ENCODE measurements at regions of chr2 and their contacts with region 1.

Region 1: DNA sequence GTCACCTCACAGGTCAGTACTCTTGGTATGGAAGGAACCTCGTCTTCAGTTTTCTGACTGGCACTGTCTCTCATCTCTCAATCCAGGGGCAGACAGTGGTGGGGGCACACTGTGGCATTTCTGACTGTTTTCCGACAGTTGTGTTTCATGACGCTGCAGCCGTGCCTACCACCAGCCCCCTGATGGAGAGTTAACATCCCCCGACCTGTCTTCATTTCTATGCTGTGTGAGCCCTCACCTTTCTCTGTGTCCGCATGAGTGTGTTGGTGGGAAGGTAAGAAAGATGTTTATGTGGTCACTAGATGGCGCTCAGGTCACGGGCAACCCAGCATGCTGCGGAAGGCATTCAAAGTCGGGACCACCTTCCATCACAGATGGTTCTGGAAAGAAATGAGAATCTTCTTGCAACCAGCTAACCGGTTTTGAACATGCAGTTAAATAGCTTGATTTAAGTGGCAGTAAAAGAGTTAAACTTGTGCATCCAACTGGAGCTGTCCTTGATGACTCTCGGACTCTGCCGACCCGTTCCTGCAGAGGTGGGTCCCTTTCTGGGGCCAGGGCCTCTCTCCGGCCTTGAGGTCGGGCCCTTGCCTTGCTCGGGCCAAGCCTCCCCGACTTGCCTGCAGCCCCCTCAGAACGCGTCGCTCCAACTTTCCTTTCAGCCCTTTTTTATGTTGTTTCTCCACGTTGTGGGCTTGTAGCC is 92.4 kb downstream of the DYSF start:
- H3K4me3 Mint-ChIP-seq: no peak overlapping the region
- H3K27ac Mint-ChIP-seq: peak overlapping the region; percentile 54
- H3K4me1 Mint-ChIP-seq: peaks cover 18% of the 10 kb centered on the region
- H3K27me3 Mint-ChIP-seq: peaks cover 6% of the 10 kb centered on the region

Region 2: GRCh38 chr2:71933467-71934319 is 388.0 kb after region 1 on chr2:
- intact Hi-C with region 1: no loop called
- H3K4me3 Mint-ChIP-seq: no peak overlapping the region
- H3K27ac Mint-ChIP-seq: no peak overlapping the region
- H3K4me1 Mint-ChIP-seq: peaks cover 5% of the 10 kb centered on the region
- H3K27me3 Mint-ChIP-seq: no peaks in the 10 kb centered on the region

Region 3: GRCh38 chr2:72150157-72150865 is 604.6 kb after region 1 on chr2:
- intact Hi-C with region 1: loop called (anchors 5 kb)
- H3K4me3 Mint-ChIP-seq: no peak overlapping the region
- H3K27ac Mint-ChIP-seq: no peak overlapping the region
- H3K4me1 Mint-ChIP-seq: peaks cover 37% of the 10 kb centered on the region
- H3K27me3 Mint-ChIP-seq: peaks cover 74% of the 10 kb centered on the region